ENCODE measurements at regions of chr2 and their contacts with region 1.

Region 1: GRCh38 chr2:168765401-168765800 is 37.0 kb upstream of the NOSTRIN start:
- DNase-seq: no peak
- H3K4me3 ChIP-seq: no peak overlapping the region
- H3K27ac ChIP-seq: no peak overlapping the region
- H3K4me1 ChIP-seq: no peaks in the 10 kb centered on the region
- H3K27me3 ChIP-seq: no peaks in the 10 kb centered on the region
- CTCF ChIP-seq: no peak
- POLR2A ChIP-seq: no peak

Region 2: GRCh38 chr2:168717790-168718502 is 47.5 kb before region 1 on chr2:
- intact Hi-C with region 1: loop called (anchors 2 kb)
- DNase-seq: no peak
- H3K4me3 ChIP-seq: no peak overlapping the region
- H3K27ac ChIP-seq: no peak overlapping the region
- H3K4me1 ChIP-seq: no peaks in the 10 kb centered on the region
- H3K27me3 ChIP-seq: no peaks in the 10 kb centered on the region
- CTCF ChIP-seq: no peak
- POLR2A ChIP-seq: no peak

Measured in breast epithelium (tissue), 4 donors.